Activated naive CD4-positive, alpha-beta T cell treated with anti-CD3 and anti-CD28 coated beads for 36 hours (primary cell): ENCODE measurements at regions of chr4 and their contacts with region 1.

Region 1: DNA sequence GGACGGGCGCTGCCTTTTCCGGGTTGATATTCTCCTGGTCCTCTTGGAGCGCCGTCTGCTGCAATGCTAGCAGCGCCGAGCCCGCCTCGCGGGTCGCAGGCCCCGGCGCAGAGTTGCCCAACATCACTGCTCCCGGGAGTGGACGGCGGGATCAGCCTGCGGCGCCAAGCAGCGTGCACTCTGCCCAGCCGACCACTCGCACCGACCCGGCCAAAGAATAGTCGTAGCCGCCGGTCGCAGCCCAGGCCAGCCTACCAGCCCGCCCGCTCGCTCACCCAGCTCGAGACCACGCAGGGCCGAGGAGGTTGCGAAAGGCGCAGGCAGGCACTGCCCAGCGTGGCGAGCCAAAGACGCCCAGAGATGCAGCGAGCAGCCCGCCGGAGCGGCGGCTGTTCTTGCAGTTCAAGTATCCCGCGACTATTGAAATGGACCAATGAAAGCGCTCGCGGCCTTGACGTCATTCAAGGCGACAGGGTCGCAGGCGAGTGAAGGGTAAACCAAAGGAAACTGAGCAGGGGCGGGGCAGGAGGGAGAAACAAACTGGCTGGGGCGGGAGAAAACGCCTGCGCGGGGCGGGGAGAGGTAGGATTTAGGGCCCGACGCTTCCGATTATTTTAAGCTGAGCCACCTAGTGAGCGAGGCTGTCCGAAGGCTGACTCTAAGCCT is at the start of gene CCNA2:
- DNase-seq: peak; percentile 99
- H3K4me3 Mint-ChIP-seq: peak within 1 kb of the TSS; percentile 98
- H3K27ac Mint-ChIP-seq: peak within 1 kb of the TSS; percentile 86
- H3K4me1 Mint-ChIP-seq: peaks cover 20% of the 10 kb centered on the region
- H3K27me3 Mint-ChIP-seq: no peaks in the 10 kb centered on the region
- total RNA-seq, gene CCNA2: 133 to 138 TPM

Region 2: DNA sequence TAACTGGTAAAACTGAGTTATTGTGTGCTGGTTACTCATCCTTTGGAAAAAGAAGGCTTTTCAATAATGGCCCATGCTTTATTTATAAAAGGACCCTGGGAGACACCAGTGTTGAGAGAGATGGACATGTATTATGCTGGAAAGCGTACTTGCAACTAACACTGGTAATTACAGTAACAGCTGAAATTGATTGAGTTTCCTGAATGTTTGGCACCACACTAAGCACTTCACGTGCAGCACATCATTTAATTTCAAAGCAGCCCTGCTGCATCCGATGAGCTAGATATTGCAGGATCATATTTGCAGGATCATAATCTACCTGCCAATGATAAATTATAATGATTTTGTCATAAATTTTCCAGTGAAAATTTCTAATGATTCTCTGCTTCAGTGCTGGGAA is 524.3 kb before region 1 on chr4:
- CTCF ChIA-PET with region 1: no interaction called
- intact Hi-C with region 1: no loop called
- DNase-seq: no peak
- H3K4me3 Mint-ChIP-seq: no peak overlapping the region
- H3K27ac Mint-ChIP-seq: no peak overlapping the region
- H3K4me1 Mint-ChIP-seq: peaks cover 2% of the 10 kb centered on the region
- H3K27me3 Mint-ChIP-seq: no peaks in the 10 kb centered on the region

Region 3: GRCh38 chr4:121696581-121697461 is 126.8 kb before region 1 on chr4 and contains the start of gene ANXA5:
- CTCF ChIA-PET with region 1: no interaction called
- intact Hi-C with region 1: loop called (anchors 1 kb)
- DNase-seq: peak; percentile 79
- H3K4me3 Mint-ChIP-seq: peak within 1 kb of the TSS; percentile 93
- H3K27ac Mint-ChIP-seq: peak within 1 kb of the TSS; percentile 91
- H3K4me1 Mint-ChIP-seq: peaks cover 11% of the 10 kb centered on the region
- H3K27me3 Mint-ChIP-seq: peaks cover 14% of the 10 kb centered on the region
- total RNA-seq, gene ANXA5: 98.4 to 99.5 TPM

Region 4: GRCh38 chr4:121869841-121870656 is 46.4 kb after region 1 on chr4 and contains the start of gene BBS7:
- CTCF ChIA-PET with region 1: interaction called, 5 read pairs
- intact Hi-C with region 1: loop called (anchors 1 kb)
- DNase-seq: peak; percentile 99
- H3K4me3 Mint-ChIP-seq: peak within 1 kb of the TSS; percentile 95
- H3K27ac Mint-ChIP-seq: peak within 1 kb of the TSS; percentile 76
- H3K4me1 Mint-ChIP-seq: peaks cover 30% of the 10 kb centered on the region
- H3K27me3 Mint-ChIP-seq: peaks cover 11% of the 10 kb centered on the region
- total RNA-seq, gene BBS7: 16.6 to 19.4 TPM